ENCODE measurements at regions of chr15 and their contacts with region 1.

Region 1: DNA sequence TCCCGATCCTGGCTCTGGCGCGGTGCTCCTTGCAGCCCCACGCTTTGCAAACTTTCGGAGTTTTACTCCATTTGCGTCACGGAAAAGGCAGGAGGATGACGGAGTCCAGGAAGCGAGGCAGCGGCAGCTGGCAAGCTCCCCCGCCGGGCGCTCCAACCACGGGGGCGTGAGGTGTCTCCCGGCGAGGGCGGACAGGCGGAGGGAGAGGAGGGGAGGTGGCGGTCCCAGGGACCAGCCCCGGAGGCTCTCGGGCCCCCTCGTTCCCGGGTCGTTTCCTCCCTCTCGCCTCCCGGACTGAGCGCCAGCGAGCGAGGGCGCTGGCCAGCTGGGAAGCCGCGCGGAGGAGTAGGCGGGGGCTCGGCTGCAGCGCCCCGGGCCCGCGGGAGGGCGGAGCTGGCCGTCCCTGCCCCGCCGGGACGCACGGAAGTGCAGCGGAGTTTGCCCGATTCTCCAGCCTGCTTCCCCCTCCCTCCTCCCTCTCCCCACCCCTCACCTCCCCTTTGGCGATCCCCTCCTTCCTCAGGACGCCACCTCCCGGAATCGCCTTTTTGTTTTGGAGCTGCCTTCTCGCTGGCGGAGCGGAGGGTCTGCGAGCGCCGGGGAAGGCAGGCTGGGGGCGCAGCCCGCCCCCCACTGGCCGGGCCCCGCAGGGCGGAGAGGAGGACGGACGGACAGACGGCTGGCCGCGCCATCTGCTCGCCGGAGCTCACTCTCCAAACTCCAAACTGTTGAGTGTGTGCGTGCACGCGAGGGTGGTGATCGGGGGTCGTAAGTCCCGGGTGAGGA is at the start of gene SNX33:
- DNase-seq: peak; percentile 79
- ATAC-seq: peak; percentile 71
- H3K4me3 Mint-ChIP-seq: peak within 1 kb of the TSS; percentile 91
- H3K27ac Mint-ChIP-seq: peak within 1 kb of the TSS; percentile 98
- H3K4me1 Mint-ChIP-seq: peaks cover 51% of the 10 kb centered on the region
- H3K27me3 Mint-ChIP-seq: peaks cover 23% of the 10 kb centered on the region
- CTCF ChIP-seq: no peak; the same call in 1 of the 2 replicates
- total RNA-seq, gene SNX33: 17.8 to 19.8 TPM (median 18.9 TPM) in 3 replicates

Region 2: GRCh38 chr15:75508840-75509532 is 138.6 kb before region 1 on chr15:
- CTCF ChIA-PET with region 1: interaction called, 11 read pairs
- POLR2A ChIA-PET with region 1: no interaction called
- DNase-seq: no peak
- ATAC-seq: no peak
- H3K4me3 Mint-ChIP-seq: no peak overlapping the region
- H3K27ac Mint-ChIP-seq: peak overlapping the region; percentile 14; the same call in 1 of the 2 replicates
- H3K4me1 Mint-ChIP-seq: no peaks in the 10 kb centered on the region
- H3K27me3 Mint-ChIP-seq: no peaks in the 10 kb centered on the region
- CTCF ChIP-seq: no peak

Region 3: DNA sequence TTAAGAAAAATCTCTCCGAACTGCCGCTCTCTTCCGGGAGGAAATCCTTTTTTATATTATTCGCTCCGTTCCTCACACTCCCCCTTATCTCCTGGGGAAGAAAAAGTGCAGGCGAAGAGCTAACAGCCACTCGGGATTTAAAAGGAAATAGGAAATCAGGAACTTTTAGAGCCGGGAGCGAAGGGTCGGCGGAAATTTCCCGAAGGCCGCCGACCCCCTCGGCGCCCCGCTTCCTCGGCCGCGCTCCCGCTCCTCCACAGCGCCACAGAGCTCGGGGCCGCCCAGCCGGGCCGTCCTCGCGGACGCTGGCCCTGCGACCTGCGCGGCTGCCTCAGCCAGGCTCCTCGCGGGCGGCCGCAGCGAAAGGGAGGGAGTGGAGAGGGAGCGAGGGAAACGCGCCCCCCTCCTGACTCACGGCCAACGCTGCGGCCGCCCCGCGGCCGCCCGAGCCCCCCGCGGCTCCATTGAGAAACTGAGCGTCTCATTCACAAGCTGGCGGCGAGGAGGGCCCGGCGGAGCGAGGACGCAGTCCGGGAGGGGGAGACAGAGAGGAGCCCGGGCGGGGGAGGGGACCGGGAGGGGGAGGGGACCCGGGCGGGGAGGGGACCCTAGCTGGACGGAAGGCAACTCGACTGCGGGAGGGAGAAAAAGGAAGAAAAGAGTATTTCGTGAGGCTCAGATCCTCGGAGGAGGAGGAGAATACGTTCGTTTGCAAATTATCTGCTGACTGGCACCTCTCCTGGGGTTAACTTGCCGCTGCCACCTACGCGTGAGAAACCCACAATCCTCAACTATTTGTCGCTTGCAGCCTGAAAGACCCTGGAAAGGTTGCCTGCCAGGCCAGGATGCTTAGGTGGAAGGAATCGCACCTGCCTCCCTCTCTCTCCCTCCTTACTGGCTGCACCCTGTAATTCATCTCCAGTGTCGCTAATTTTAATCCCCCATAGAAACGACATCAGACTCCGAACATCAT is 68.3 kb before region 1 on chr15 and contains the start of gene PTPN9:
- CTCF ChIA-PET with region 1: interaction called, 18 read pairs
- POLR2A ChIA-PET with region 1: interaction called, 6 read pairs
- DNase-seq: peak; percentile 94
- ATAC-seq: peak; percentile 83
- H3K4me3 Mint-ChIP-seq: peak within 1 kb of the TSS; percentile 97
- H3K27ac Mint-ChIP-seq: peak within 1 kb of the TSS; percentile 96
- H3K4me1 Mint-ChIP-seq: peaks cover 26% of the 10 kb centered on the region
- H3K27me3 Mint-ChIP-seq: no peaks in the 10 kb centered on the region
- CTCF ChIP-seq: no peak
- total RNA-seq, gene PTPN9: 36.1 to 45.5 TPM (median 36.6 TPM) in 3 replicates

Region 4: DNA sequence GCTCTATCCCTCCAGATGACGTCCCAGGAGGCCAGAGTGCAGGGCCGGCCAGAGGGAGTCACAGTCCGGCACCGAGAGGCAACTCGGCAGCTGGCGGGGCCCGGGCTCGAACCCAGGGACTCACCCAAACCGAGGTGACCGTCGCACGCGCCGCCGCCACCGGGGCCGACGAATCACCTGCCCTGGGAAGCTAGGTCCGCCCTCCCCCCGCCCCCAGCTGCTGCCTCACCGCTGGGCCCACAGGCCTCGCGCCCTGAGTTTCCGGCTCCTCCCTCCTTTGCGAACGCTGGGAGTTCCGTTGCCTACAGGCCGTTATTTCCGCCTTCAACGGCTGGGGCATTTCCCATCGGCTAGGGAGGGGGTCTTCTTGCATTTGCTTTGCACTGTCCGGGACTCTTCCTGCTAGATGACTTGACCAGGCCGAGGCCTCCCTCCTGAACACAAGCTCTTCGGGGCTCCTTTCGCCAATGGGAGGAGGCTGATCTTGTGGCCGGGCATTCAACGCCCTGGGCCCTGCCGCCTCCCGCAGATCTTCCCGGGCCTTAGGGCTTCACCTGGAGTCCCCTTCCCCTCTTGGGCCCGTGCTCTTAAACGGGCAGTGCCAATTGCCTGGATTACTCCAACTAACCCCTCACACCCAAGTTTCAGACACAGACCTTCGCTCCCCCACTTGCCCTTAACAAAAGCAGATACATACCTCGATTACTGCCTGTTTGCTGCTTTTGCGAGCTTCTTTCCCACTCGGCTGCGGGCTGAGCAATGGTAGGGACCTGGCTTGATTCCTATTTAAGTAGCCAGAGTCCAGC is 21.8 kb before region 1 on chr15 and contains the start of gene SNUPN:
- CTCF ChIA-PET with region 1: interaction called, 11 read pairs
- POLR2A ChIA-PET with region 1: interaction called, 20 read pairs
- DNase-seq: peak; percentile 96
- ATAC-seq: peak; percentile 88
- H3K4me3 Mint-ChIP-seq: peak within 1 kb of the TSS; percentile 91
- H3K27ac Mint-ChIP-seq: peak within 1 kb of the TSS; percentile 98
- H3K4me1 Mint-ChIP-seq: peaks cover 12% of the 10 kb centered on the region
- H3K27me3 Mint-ChIP-seq: no peaks in the 10 kb centered on the region
- CTCF ChIP-seq: no peak
- total RNA-seq, gene SNUPN: 25.9 to 28.4 TPM (median 27.9 TPM) in 3 replicates

Region 5: DNA sequence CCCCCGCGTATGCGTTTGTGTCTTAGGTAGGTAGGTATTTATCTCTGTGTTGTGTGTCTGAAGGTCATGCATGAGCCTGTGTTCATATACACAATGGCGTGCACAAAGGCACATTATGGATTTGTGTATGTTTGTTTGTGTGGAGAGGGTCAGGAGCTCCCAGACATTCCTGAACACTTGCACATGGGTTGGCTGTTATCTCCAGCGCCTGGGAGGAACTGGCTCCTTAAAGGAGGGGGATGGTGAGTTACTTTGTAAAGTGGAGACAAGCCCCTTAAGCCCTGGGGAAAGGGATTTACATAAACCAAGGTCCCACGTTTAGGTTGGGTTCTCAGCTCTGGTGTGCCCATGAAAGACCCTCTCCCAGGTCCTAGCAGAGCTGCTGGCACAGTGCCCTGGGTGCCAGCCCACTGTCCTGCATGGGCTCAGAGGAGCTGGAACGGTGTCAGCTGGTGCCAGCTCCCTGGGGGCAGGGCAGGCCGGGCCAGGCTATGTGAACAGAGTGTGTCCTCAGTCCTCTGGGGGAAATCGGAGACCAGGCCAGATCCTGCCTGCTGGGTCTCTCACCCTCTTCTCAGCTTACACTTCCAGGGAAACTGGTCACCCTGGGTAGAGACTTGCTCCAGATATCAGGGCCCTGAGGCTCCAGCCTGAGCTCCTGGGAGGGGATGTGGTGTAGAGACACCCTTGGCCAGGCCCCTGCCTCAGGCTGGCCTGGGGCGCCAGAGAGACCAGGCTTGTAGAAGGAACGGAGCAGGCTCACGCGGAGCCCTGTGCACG is 25.3 kb after region 1 on chr15:
- CTCF ChIA-PET with region 1: interaction called, 11 read pairs
- POLR2A ChIA-PET with region 1: interaction called, 4 read pairs
- DNase-seq: no peak
- ATAC-seq: peak; percentile 39
- H3K4me3 Mint-ChIP-seq: no peak overlapping the region
- H3K27ac Mint-ChIP-seq: peak overlapping the region; percentile 89; the same call in 1 of the 2 replicates
- H3K4me1 Mint-ChIP-seq: peaks cover 20% of the 10 kb centered on the region
- H3K27me3 Mint-ChIP-seq: no peaks in the 10 kb centered on the region
- CTCF ChIP-seq: no peak

Region 6: GRCh38 chr15:75684642-75685041 is 37.1 kb after region 1 on chr15:
- CTCF ChIA-PET with region 1: interaction called, 11 read pairs
- POLR2A ChIA-PET with region 1: interaction called, 6 read pairs
- DNase-seq: no peak
- ATAC-seq: no peak
- H3K4me3 Mint-ChIP-seq: no peak overlapping the region
- H3K27ac Mint-ChIP-seq: no peak overlapping the region
- H3K4me1 Mint-ChIP-seq: peaks cover 22% of the 10 kb centered on the region
- H3K27me3 Mint-ChIP-seq: 0 out of 2 replicates have a peak, but pooled peaks cover 2% of the 10 kb centered on the region
- CTCF ChIP-seq: no peak